ENCODE measurements at regions of chr9 and their contacts with region 1.

Region 1: GRCh38 chr9:120579750-120580590 is at the start of gene CDK5RAP2:
- DNase-seq: peak; percentile 94 to 96
- H3K4me3 ChIP-seq: peak within 1 kb of the TSS; percentile 85 to 94
- H3K27ac ChIP-seq: peak within 1 kb of the TSS; percentile 62 to 78
- H3K4me1 ChIP-seq: no peaks in the 10 kb centered on the region
- H3K27me3 ChIP-seq: no peaks in the 10 kb centered on the region
- CTCF ChIP-seq: no peak
- POLR2A ChIP-seq: no peak
- total RNA-seq, gene CDK5RAP2: 28.9 to 62.3 (median 40.0) TPM

Region 2: GRCh38 chr9:120507936-120508510 is 71.9 kb before region 1 on chr9:
- intact Hi-C with region 1: no loop called
- DNase-seq: no peak
- H3K4me3 ChIP-seq: no peak overlapping the region
- H3K27ac ChIP-seq: no peak overlapping the region
- H3K4me1 ChIP-seq: no peaks in the 10 kb centered on the region
- H3K27me3 ChIP-seq: no peaks in the 10 kb centered on the region
- CTCF ChIP-seq: no peak
- POLR2A ChIP-seq: no peak

Region 3: GRCh38 chr9:122092611-122093506 is 1512.9 kb after region 1 on chr9 and contains the start of gene TTLL11:
- intact Hi-C with region 1: loop called (anchors 5 kb)
- DNase-seq: peak; percentile 95 to 96
- H3K4me3 ChIP-seq: peak within 1 kb of the TSS; percentile 56 to 70
- H3K27ac ChIP-seq: peak within 1 kb of the TSS; percentile 38 to 54
- H3K4me1 ChIP-seq: peaks cover 0 to 3% of the 10 kb centered on the region in 2 donors
- H3K27me3 ChIP-seq: no peaks in the 10 kb centered on the region
- CTCF ChIP-seq: peak in 1 of 4 experiments; percentile 39
- POLR2A ChIP-seq: peak; percentile 26 to 60
- total RNA-seq, gene TTLL11: 7.4 to 14.7 (median 11.0) TPM